A549 (cell line): ENCODE measurements at regions of chrX and their contacts with region 1.

Region 1: GRCh38 chrX:57821703-57822375 is 88.4 kb downstream of the ZXDA start:
- DNase-seq: peak; percentile 15 to 66
- ATAC-seq: peak; percentile 88 to 94; a peak in 5 of 6 replicates
- H3K4me3 ChIP-seq: no peak overlapping the region
- H3K27ac ChIP-seq: no peak overlapping the region
- H3K4me1 ChIP-seq: no peaks in the 10 kb centered on the region
- CTCF ChIP-seq: peak; percentile 54
- EP300 ChIP-seq: no peak
- POLR2A ChIP-seq: no peak
- RAD21 ChIP-seq: peak; percentile 74 to 83

Region 2: DNA sequence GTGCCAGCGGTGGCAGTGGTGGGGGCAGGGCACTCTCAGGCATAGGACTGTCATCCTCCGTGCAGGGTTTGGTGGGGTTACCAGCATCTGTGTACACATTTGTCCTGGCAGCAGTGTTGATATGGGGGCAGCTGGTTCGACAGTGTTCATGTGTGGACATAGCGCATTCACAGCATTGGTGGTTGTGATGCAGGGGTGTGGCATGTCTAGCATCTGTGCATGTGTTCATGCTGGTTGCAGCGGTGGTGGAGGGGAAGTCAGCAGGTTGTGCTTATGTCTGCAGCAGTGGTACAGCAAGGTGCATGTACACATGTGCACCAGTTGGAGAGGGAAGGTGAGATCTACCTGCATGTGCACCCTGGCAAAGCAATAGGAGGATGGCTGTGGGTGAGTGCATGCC is 305.3 kb before region 1 on chrX:
- CTCF ChIA-PET with region 1: no interaction called
- POLR2A ChIA-PET with region 1: no interaction called
- DNase-seq: no peak
- ATAC-seq: no peak
- H3K4me3 ChIP-seq: no peak overlapping the region
- H3K27ac ChIP-seq: no peak overlapping the region
- H3K4me1 ChIP-seq: no peaks in the 10 kb centered on the region
- CTCF ChIP-seq: no peak
- EP300 ChIP-seq: no peak
- POLR2A ChIP-seq: no peak
- RAD21 ChIP-seq: no peak

Region 3: GRCh38 chrX:57587607-57588006 is 234.2 kb before region 1 on chrX:
- CTCF ChIA-PET with region 1: no interaction called
- POLR2A ChIA-PET with region 1: no interaction called
- DNase-seq: no peak
- ATAC-seq: no peak
- H3K4me3 ChIP-seq: no peak overlapping the region
- H3K27ac ChIP-seq: no peak overlapping the region
- H3K4me1 ChIP-seq: peaks cover 17% of the 10 kb centered on the region
- CTCF ChIP-seq: no peak
- EP300 ChIP-seq: no peak
- POLR2A ChIP-seq: no peak
- RAD21 ChIP-seq: no peak

Region 4: GRCh38 chrX:57871463-57871862 is 49.6 kb after region 1 on chrX:
- CTCF ChIA-PET with region 1: no interaction called
- POLR2A ChIA-PET with region 1: no interaction called
- DNase-seq: no peak
- ATAC-seq: no peak
- H3K4me3 ChIP-seq: no peak overlapping the region
- H3K27ac ChIP-seq: no peak overlapping the region
- H3K4me1 ChIP-seq: no peaks in the 10 kb centered on the region
- CTCF ChIP-seq: no peak
- EP300 ChIP-seq: no peak
- POLR2A ChIP-seq: no peak
- RAD21 ChIP-seq: no peak

Region 5: DNA sequence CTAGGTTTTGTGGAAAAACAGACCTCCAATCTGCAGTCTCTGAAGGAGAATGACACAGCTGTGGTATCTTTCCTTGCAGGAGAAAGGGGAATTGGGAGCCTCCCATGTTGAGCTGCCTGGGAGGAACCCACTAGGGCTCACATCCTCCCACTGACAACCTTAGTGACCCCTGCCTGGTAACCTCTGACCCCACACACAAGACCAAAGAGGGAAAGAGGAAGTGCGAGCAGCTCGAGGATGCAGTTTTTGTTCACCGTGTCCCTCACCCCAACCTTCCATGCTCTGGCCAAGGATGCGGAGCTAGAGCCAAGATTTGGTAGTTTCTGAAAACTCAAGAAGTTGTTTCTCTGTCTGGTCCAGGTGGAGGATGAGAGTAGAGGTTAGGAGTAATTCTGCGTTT is 93.8 kb after region 1 on chrX:
- CTCF ChIA-PET with region 1: interaction called, 10 read pairs
- POLR2A ChIA-PET with region 1: no interaction called
- DNase-seq: no peak
- ATAC-seq: no peak
- H3K4me3 ChIP-seq: no peak overlapping the region
- H3K27ac ChIP-seq: no peak overlapping the region
- H3K4me1 ChIP-seq: peaks cover 4% of the 10 kb centered on the region; the same call in 2 of the 3 replicates
- CTCF ChIP-seq: no peak
- EP300 ChIP-seq: no peak
- POLR2A ChIP-seq: no peak
- RAD21 ChIP-seq: no peak

Region 6: DNA sequence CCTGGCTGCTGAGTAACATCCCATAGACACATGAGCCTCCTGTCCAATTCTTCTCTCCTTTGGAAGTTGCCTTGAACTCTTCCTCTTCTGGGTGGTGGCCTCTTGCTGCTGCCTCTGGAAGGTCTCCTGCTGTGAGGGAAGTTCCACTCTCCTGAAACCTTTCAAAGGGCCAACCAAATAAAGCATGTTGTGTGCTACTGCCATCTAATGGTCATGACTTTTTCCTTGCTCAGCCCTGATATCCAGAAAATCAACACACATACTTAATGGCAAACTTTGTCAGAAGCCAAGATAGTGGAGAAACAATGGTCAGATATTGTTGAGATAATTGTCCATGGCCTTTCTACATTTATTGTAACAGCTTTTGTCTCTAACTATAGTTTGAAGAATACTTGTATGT is 107.5 kb after region 1 on chrX:
- CTCF ChIA-PET with region 1: interaction called, 12 read pairs
- POLR2A ChIA-PET with region 1: interaction called, 5 read pairs
- DNase-seq: peak in 1 of 2 experiments; percentile 36
- ATAC-seq: peak; percentile 54 to 81; a peak in 4 of 6 replicates
- H3K4me3 ChIP-seq: no peak overlapping the region
- H3K27ac ChIP-seq: no peak overlapping the region
- H3K4me1 ChIP-seq: no peaks in the 10 kb centered on the region
- CTCF ChIP-seq: 0 out of 3 replicates have a peak, but pooled peaks have one; percentile 22
- EP300 ChIP-seq: no peak
- POLR2A ChIP-seq: no peak
- RAD21 ChIP-seq: peak in 1 of 2 experiments; percentile 35; a peak in 2 of 5 replicates

Region 7: DNA sequence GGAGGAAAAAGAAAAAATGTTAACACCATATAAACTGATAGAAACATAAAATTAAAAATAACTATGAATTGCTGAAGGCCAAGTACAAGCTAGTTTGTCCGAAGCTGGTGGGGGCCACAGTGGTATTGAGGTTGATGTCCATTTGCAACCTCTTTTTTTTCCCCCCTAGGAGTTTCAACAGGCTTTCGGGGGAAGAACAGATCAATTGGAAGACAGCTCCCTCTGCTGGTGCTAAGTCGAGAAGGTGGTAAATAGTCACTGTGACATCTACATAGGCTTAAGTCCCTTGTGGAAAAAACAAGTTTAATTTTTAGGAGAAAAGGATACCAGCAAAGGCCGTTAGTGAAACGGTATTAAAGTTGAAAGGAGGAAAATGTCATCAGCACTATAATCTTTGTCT is 204.1 kb after region 1 on chrX:
- CTCF ChIA-PET with region 1: interaction called, 15 read pairs
- POLR2A ChIA-PET with region 1: no interaction called
- DNase-seq: peak; percentile 6 to 44
- ATAC-seq: peak in 1 of 2 experiments; percentile 65; a peak in 2 of 6 replicates
- H3K4me3 ChIP-seq: no peak overlapping the region
- H3K27ac ChIP-seq: no peak overlapping the region
- H3K4me1 ChIP-seq: no peaks in the 10 kb centered on the region
- CTCF ChIP-seq: peak; percentile 27; the same call in 1 of the 3 replicates
- EP300 ChIP-seq: no peak
- POLR2A ChIP-seq: no peak
- RAD21 ChIP-seq: peak; percentile 20 to 60; a peak in 3 of 5 replicates